Transverse colon (tissue), 4 donors: ENCODE measurements at regions of chr13 and their contacts with region 1.

Region 1: DNA sequence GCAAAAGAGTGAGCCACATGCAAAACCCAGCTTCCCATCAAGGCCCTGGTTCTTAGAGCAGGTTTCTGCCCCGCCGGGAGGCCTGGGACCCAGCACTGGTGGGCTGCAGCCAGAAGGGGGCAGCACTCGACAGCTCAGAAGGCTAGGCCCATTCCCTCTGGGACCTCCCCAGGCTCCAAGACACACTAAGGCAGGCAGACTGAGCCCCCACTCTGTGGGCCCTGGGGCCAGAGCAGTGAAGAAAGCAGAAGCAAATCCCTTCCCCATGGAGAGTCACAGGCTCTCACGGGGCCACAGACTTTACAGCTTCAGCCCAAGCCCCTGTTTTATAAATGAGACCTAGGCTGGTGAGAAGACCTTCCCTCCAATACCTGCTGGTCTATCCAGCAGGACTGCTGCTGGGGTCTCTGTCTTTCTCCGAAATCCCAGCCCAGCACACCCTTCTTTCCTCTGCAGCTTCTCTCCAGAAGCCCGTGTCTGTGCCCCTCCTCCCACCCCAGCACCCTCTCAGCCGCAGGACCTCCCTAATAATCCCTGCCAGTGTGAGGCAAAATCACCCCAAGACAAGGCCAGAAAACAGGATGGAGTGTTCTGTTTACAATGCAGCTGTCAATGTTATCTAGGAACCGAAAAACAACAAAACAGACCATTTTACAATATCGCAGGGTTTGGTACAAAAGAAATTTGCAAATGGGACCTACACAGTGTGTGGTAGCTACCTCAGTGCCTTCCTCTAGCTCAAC is 109.3 kb downstream of the ABCC4 start:
- DNase-seq: peak; percentile 83
- H3K4me3 ChIP-seq: no peak overlapping the region
- H3K27ac ChIP-seq: peak overlapping the region in 3 of 4 donors; percentile 4 to 36 (median 34)
- H3K4me1 ChIP-seq: peaks cover 0 to 5% (median 0%) of the 10 kb centered on the region in 4 donors
- H3K27me3 ChIP-seq: no peaks in the 10 kb centered on the region
- CTCF ChIP-seq: peak; percentile 70 to 85 (median 80)
- EP300 ChIP-seq: no peak
- POLR2A ChIP-seq: no peak

Region 2: DNA sequence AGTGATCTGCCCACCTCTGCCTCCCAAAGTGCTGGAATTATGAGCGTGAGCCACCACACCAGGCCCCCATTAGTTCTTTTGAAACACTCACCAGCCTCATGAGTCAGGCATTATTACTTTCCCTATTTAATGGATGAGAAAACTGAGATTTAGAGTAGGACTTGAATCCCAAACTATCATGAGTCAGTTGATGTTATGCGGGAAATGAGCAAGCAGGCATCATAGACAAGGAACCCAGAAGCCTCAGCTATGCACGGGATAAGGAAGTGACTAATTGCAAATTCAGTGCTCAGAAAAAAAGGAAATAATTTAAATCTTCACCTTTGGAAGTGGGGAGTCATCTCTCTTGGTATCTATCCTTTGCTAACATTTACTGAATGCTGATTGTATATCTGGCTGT is 108.2 kb before region 1 on chr13:
- in situ Hi-C with region 1: no loop called
- intact Hi-C with region 1: no loop called
- DNase-seq: no peak
- H3K4me3 ChIP-seq: no peak overlapping the region
- H3K27ac ChIP-seq: no peak overlapping the region
- H3K4me1 ChIP-seq: no peaks in the 10 kb centered on the region
- H3K27me3 ChIP-seq: no peaks in the 10 kb centered on the region
- CTCF ChIP-seq: no peak
- EP300 ChIP-seq: no peak
- POLR2A ChIP-seq: no peak

Region 3: DNA sequence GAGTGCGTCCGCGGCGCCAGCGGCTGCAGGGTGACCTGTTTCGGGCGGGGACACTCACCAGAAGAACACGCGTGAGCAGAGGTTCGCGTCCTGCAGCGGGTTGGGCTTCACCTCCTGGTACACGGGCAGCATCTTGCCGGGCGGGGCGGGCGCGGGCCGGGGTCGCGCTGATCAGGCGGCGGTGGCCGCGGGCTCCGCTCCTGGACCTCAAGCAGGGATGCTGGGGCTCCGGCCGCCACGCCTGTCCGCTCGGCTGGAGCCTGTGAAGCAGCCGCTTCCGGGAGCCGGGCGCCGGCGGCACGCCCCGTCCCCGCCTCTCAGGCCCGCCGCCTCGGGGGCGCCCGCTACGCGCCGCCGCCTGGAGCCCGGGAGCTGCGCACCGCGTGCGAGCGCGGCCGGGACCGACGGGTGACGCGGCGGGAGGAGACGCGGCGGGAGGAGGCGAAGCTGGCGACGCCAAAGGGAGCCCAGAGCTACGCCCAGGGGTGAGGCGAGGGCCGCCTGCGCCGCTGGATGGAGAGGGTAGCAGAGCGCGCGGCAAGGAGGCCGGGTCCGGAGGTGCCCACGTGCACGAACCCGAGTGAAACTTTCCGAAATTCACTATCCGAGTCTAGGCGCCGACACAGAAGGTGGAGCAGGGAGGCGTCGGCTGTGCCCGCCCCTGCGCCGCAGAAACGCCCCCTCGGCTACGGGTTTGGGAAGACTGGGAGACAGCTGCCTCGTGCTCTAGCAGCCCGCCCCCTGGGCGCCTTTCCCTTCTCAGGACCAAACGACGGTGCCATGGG is 109.4 kb after region 1 on chr13 and contains the start of gene ABCC4:
- in situ Hi-C with region 1: loop called in 2 of 4 experiments (anchors 10 kb)
- intact Hi-C with region 1: loop called (anchors 5 kb)
- DNase-seq: peak; percentile 73
- H3K4me3 ChIP-seq: peak within 1 kb of the TSS; percentile 35 to 89 (median 70)
- H3K27ac ChIP-seq: peak within 1 kb of the TSS; percentile 84 to 87 (median 85)
- H3K4me1 ChIP-seq: peaks cover 0 to 53% (median 28%) of the 10 kb centered on the region in 4 donors
- H3K27me3 ChIP-seq: no peaks in the 10 kb centered on the region
- CTCF ChIP-seq: no peak
- EP300 ChIP-seq: no peak
- POLR2A ChIP-seq: no peak
- total RNA-seq, gene ABCC4: 15.8 to 26.0 (median 23.8) TPM

Region 4: DNA sequence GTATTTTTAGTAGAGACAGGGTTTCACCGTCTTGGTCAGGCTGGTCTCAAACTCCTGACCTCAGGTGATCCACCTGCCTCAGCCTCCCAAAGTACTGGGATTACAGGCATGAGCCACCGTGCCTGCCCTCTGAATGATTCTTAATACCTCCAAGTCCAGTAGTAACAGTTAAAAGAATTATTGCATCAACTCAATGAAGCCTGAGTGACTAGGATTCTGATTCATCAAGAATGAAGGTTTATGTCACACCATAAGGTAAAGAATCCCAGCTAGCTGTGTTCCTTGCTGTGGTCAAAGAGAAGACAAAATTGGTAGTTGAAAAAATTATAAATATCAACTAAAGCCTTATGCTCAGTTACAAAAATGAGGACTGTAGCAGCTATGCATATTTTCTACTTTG is 190.4 kb after region 1 on chr13:
- in situ Hi-C with region 1: loop called in 2 of 4 experiments (anchors 5 to 10 kb)
- intact Hi-C with region 1: loop called (anchors 5 kb)
- DNase-seq: no peak
- H3K4me3 ChIP-seq: no peak overlapping the region
- H3K27ac ChIP-seq: no peak overlapping the region
- H3K4me1 ChIP-seq: peaks cover 0 to 14% (median 8%) of the 10 kb centered on the region in 4 donors
- H3K27me3 ChIP-seq: no peaks in the 10 kb centered on the region
- CTCF ChIP-seq: no peak
- EP300 ChIP-seq: no peak
- POLR2A ChIP-seq: no peak

Region 5: GRCh38 chr13:95387733-95388207 is 195.8 kb after region 1 on chr13:
- in situ Hi-C with region 1: loop called in 2 of 4 experiments (anchors 5 to 10 kb)
- intact Hi-C with region 1: loop called (anchors 5 kb)
- DNase-seq: no peak
- H3K4me3 ChIP-seq: no peak overlapping the region
- H3K27ac ChIP-seq: peak overlapping the region in 2 of 4 donors; percentile 31 to 66
- H3K4me1 ChIP-seq: peaks cover 0 to 8% (median 2%) of the 10 kb centered on the region in 4 donors
- H3K27me3 ChIP-seq: no peaks in the 10 kb centered on the region
- CTCF ChIP-seq: no peak
- EP300 ChIP-seq: no peak
- POLR2A ChIP-seq: no peak

Region 6: DNA sequence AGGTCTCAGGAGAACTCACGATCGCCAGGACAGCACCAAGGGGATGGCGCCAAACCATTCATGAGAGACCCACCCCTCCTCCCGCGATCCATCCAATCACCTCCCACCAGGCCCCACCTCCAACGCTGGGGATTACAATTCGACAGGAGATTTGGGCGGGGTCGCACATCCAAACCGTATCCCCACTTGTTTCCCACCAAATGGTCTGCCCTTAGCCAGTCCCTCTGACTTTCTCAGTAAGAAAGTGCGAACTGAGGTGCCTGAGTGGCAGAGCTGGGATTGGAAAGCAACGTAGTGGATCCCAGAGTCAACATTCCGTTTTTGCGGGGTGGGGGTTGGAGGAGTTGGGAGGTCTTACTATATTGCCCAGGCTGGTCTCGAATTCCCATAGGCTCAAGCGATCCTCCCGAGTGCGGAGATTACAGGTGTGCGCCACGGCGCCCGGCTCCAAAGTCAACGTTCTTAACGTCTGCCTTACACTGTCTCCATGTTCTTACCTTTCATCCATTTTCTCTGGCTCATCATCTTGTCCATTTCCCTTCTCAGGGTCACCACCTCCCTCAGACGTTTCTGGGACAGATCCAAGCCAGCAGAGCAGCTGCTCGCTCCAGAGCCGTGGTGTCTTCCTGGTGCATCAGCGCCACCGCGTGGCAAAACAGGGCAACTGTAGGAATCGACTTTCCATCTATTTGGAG is 212.0 kb after region 1 on chr13:
- in situ Hi-C with region 1: loop called in 2 of 4 experiments (anchors 5 to 10 kb)
- intact Hi-C with region 1: loop called (anchors 5 kb)
- DNase-seq: peak; percentile 81
- H3K4me3 ChIP-seq: peak overlapping the region in 3 of 4 donors; percentile 9 to 40 (median 22)
- H3K27ac ChIP-seq: no peak overlapping the region
- H3K4me1 ChIP-seq: peaks cover 0 to 7% (median 6%) of the 10 kb centered on the region in 4 donors
- H3K27me3 ChIP-seq: peaks cover 4% of the 10 kb centered on the region
- CTCF ChIP-seq: peak; percentile 92 to 93 (median 93)
- EP300 ChIP-seq: no peak
- POLR2A ChIP-seq: no peak